PC-9 (cell line): ENCODE measurements at regions of chr7 and their contacts with region 1.

Region 1: GRCh38 chr7:74026903-74027551 is 946 bp upstream of the ELN start:
- DNase-seq: peak in 1 of 2 experiments; percentile 72
- H3K4me3 ChIP-seq: no peak overlapping the region
- H3K27ac ChIP-seq: no peak overlapping the region
- H3K4me1 ChIP-seq: peaks cover 12% of the 10 kb centered on the region
- H3K27me3 ChIP-seq: peaks cover 12% of the 10 kb centered on the region; the same call in 1 of the 2 replicates
- CTCF ChIP-seq: peak; percentile 95

Region 2: DNA sequence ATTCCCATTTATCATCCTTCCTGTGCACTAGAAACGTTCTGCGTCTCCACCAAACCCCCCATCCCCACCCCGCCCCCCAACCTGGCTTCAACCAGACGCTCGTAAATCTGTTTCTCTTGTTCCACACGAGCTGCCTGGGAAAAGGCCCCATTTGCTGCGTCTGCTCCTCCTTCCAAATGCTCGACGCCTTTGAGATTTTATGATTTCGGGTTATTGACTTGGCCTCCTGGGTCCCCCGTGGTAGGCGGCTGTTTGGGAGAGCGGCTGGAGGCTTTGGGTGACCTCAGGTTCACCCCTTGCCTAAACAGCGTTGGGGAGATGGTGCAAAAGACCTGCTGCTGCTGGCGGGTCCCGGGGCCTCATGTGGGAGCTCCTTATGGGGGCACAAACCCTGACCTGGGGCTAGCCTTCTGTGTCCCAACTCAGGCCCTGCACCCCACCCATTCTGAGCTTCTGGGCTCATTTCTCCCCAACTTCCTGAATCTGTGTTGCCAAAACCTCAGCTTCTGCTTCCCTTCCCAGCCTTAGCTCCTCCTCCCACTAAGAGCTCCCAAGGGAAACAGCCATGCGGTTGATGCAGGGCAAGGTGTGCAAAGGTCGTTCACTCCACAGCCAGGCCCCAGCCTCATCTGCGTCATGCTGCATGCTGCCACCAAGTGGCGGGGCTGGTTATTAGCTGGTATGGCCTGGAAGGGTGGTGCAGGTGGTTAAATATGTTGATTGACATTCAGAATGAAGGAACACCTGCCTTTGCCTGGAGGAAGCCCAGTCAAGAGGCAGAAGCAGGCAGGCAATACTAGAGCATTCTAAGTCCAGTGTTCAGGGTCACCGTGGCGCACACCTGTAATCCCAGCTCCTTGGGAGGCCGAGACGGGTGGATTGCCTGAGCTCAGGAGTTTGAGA is 48.1 kb before region 1 on chr7:
- CTCF ChIA-PET with region 1: interaction called, 4 read pairs
- POLR2A ChIA-PET with region 1: no interaction called
- intact Hi-C with region 1: loop called (anchors 5 kb)
- DNase-seq: peak; percentile 90 to 91
- H3K4me3 ChIP-seq: no peak overlapping the region
- H3K27ac ChIP-seq: peak overlapping the region; percentile 33; the same call in 1 of the 2 replicates
- H3K4me1 ChIP-seq: peaks cover 11% of the 10 kb centered on the region
- H3K27me3 ChIP-seq: no peaks in the 10 kb centered on the region
- CTCF ChIP-seq: peak; percentile 74

Region 3: GRCh38 chr7:74164985-74165456 is 138.0 kb after region 1 on chr7:
- CTCF ChIA-PET with region 1: interaction called, 23 read pairs
- POLR2A ChIA-PET with region 1: no interaction called
- intact Hi-C with region 1: no loop called
- DNase-seq: no peak
- H3K4me3 ChIP-seq: no peak overlapping the region
- H3K27ac ChIP-seq: no peak overlapping the region
- H3K4me1 ChIP-seq: peaks cover 6% of the 10 kb centered on the region; the same call in 1 of the 2 replicates
- H3K27me3 ChIP-seq: no peaks in the 10 kb centered on the region
- CTCF ChIP-seq: peak; percentile 28; the same call in 1 of the 2 replicates

Region 4: DNA sequence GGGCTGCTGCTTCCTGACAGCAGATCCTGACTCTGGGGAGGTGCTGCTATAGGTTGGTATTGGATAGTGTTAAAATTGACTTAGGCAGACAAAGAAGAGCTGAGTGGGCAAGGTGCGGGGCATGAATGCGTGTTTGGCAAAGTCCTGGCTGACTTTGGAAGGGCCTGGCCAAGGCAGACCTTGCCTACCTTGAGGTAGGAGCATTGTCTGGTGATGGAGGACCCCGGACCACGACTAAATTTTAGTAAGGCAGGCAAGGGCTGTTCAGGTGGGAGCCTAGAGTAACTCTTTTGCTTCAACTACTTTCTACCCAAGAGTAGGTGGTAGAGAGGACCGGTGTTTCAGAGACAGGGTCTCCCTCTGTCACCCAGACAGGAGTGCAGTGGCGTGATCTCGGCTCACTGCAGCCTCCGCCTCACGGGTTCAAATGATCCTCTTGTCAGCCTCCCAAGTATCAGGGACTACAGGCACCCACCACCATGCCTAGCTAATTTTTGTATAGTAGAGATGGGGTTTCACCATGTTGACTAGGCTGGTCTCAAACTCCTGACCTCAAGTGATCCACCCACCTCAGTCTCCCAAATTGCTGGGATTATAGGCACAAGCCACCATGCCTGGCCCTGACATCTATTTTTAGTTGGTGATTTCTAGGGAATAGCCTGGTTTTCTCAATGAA is 170.6 kb after region 1 on chr7:
- CTCF ChIA-PET with region 1: interaction called, 12 read pairs
- POLR2A ChIA-PET with region 1: no interaction called
- intact Hi-C with region 1: no loop called
- DNase-seq: no peak
- H3K4me3 ChIP-seq: no peak overlapping the region
- H3K27ac ChIP-seq: no peak overlapping the region
- H3K4me1 ChIP-seq: peaks cover 8% of the 10 kb centered on the region; the same call in 1 of the 2 replicates
- H3K27me3 ChIP-seq: no peaks in the 10 kb centered on the region
- CTCF ChIP-seq: no peak

Region 5: DNA sequence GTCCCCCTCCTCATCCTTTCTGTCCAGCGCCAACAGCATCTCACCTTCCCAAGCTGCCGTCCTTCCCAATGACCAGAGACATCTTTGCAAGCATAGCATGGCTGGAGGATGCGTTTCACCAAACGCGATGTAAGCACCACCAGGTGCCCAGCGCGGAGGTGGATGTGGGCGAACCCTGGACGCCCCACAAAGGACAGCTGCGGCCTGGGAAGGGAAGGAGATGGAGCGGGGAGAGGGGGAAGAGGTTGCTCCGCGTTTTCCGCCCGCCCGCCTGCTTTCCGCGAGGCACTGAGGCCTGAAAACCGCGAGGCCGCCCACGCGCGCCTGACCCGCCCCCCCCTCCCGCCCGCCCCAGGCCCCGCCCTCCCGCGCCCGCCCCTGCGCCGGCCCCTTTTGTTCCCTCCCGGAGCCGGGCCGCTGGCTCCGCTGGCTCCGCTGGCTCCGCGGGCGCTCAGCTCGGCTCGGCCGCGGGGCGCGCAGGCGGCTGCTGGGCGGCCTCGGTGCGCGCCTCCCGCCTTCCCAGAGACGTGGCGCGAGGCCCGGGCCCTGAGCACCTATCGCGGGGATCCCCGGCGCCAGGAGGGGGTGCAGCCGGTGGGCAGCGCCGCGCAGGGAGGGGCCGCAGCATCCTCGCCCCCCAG is 262.1 kb after region 1 on chr7 and contains the start of gene CLIP2:
- CTCF ChIA-PET with region 1: no interaction called
- POLR2A ChIA-PET with region 1: no interaction called
- intact Hi-C with region 1: no loop called
- DNase-seq: peak in 1 of 2 experiments; percentile 83
- H3K4me3 ChIP-seq: peak within 1 kb of the TSS; percentile 70
- H3K27ac ChIP-seq: peak within 1 kb of the TSS; percentile 13
- H3K4me1 ChIP-seq: peaks cover 42% of the 10 kb centered on the region
- H3K27me3 ChIP-seq: no peaks in the 10 kb centered on the region
- CTCF ChIP-seq: no peak
- total RNA-seq, gene CLIP2: 37.9 and 48.0 TPM in 2 replicates

Region 6: DNA sequence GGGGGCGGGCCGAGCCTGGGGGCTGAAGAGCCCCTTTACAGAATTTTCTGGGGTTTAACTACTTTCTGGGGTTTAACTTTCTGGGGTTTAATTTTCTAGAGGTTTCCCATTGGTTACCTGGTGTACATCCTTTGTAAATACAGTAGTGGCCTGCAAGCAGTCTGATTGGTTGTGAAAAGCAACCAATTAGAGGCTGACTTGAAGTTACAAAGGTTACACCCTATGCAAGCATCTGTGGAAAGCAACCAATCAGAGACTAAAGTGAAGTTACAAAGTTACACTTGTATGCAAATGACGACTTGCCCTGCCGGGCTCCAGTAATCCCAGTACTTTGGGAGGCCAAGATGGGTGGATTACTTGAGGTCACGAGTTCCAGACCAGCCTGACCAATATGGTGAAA is 657.9 kb after region 1 on chr7:
- CTCF ChIA-PET with region 1: no interaction called
- POLR2A ChIA-PET with region 1: no interaction called
- intact Hi-C with region 1: no loop called
- DNase-seq: no peak
- H3K4me3 ChIP-seq: no peak overlapping the region
- H3K27ac ChIP-seq: no peak overlapping the region
- H3K4me1 ChIP-seq: no peaks in the 10 kb centered on the region
- H3K27me3 ChIP-seq: no peaks in the 10 kb centered on the region
- CTCF ChIP-seq: no peak